GM12878 (cell line): ENCODE measurements at regions of chr1 and their contacts with region 1.

Region 1: GRCh38 chr1:211680752-211681327 is 5.4 kb upstream of the NEK2 start:
- DNase-seq: peak; percentile 80
- ATAC-seq: peak; percentile 84
- H3K4me3 ChIP-seq: no peak overlapping the region
- H3K27ac ChIP-seq: peak overlapping the region; percentile 38
- H3K4me1 ChIP-seq: peaks cover 16% of the 10 kb centered on the region
- H3K27me3 ChIP-seq: no peaks in the 10 kb centered on the region
- CTCF ChIP-seq: peak; percentile 66 to 87 (median 81); a peak in 5 of 6 replicates
- EP300 ChIP-seq: 0 out of 4 replicates have a peak, but pooled peaks of 1 of the 2 experiments have one; percentile 20
- POLR2A ChIP-seq: no peak
- RAD21 ChIP-seq: peak; percentile 88

Region 2: GRCh38 chr1:211611818-211612217 is 69.0 kb before region 1 on chr1:
- CTCF ChIA-PET with region 1: no interaction called
- POLR2A ChIA-PET with region 1: no interaction called
- RAD21 ChIA-PET with region 1: no interaction called
- SMC1A ChIA-PET with region 1: no interaction called
- in situ Hi-C with region 1: no loop called
- intact Hi-C with region 1: no loop called
- DNase-seq: no peak
- ATAC-seq: no peak
- H3K4me3 ChIP-seq: no peak overlapping the region
- H3K27ac ChIP-seq: no peak overlapping the region
- H3K4me1 ChIP-seq: peaks cover 8% of the 10 kb centered on the region
- H3K27me3 ChIP-seq: no peaks in the 10 kb centered on the region
- CTCF ChIP-seq: no peak
- EP300 ChIP-seq: no peak
- POLR2A ChIP-seq: no peak
- RAD21 ChIP-seq: no peak

Region 3: GRCh38 chr1:211830330-211831142 is 149.7 kb after region 1 on chr1 and contains the start of gene LPGAT1:
- CTCF ChIA-PET with region 1: interaction called, 44 read pairs
- POLR2A ChIA-PET with region 1: interaction called, 9 read pairs
- RAD21 ChIA-PET with region 1: interaction called, 6 read pairs
- SMC1A ChIA-PET with region 1: interaction called, 10 read pairs
- in situ Hi-C with region 1: no loop called
- intact Hi-C with region 1: loop called (anchors 1 kb)
- DNase-seq: no peak
- ATAC-seq: peak; percentile 82
- H3K4me3 ChIP-seq: peak within 1 kb of the TSS; percentile 98
- H3K27ac ChIP-seq: peak within 1 kb of the TSS; percentile 85
- H3K4me1 ChIP-seq: peaks cover 28% of the 10 kb centered on the region
- H3K27me3 ChIP-seq: no peaks in the 10 kb centered on the region
- CTCF ChIP-seq: peak; percentile 50 to 63 (median 53); a peak in 5 of 6 replicates
- EP300 ChIP-seq: no peak
- POLR2A ChIP-seq: peak; percentile 75
- RAD21 ChIP-seq: peak; percentile 25; the same call in 1 of the 2 replicates
- polyA plus RNA-seq, gene LPGAT1: 5.8 to 6.4 TPM

Region 4: DNA sequence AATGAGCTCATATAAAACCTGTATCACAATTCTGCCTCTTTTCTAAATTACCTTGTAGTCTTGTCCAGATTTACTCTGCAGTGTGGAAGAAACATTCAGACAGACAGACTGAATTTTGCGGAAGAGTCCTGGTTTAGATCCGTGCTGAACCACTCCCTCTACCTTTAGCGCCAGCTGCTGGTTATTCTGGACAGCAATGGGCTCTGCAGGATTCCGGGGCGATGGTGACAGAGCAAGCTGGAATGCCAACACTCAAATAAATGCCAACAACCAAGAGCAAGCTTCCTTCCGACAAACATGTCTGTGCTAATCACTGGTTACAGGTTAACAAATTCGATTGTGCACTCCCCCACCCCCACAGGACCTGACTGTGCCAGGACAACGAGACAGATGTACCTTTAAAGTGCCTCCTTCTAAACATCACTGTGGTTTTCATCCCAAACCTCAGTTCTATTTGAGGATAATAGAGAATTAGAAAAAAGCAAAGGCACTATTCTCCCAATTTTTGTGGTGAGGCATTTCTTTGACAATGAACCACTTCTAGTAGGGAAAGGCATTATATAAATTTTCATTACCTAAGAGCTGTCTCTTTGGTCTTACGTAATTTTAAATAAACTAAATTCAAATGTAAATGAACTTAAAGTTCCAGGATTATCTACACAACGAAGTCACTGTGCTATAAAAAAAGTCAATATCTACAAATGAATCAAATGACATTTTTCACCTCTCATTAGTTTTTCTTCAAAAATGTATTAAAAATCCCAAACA is 264.1 kb after region 1 on chr1:
- CTCF ChIA-PET with region 1: interaction called, 7 read pairs
- POLR2A ChIA-PET with region 1: interaction called, 4 read pairs
- RAD21 ChIA-PET with region 1: interaction called, 12 read pairs
- SMC1A ChIA-PET with region 1: interaction called, 5 read pairs
- in situ Hi-C with region 1: no loop called
- intact Hi-C with region 1: no loop called
- DNase-seq: no peak
- ATAC-seq: no peak
- H3K4me3 ChIP-seq: no peak overlapping the region
- H3K27ac ChIP-seq: no peak overlapping the region
- H3K4me1 ChIP-seq: peaks cover 8% of the 10 kb centered on the region; the same call in 1 of the 2 replicates
- H3K27me3 ChIP-seq: no peaks in the 10 kb centered on the region
- CTCF ChIP-seq: no peak
- EP300 ChIP-seq: no peak
- POLR2A ChIP-seq: no peak
- RAD21 ChIP-seq: no peak

Region 5: GRCh38 chr1:212012034-212012740 is 331.3 kb after region 1 on chr1:
- CTCF ChIA-PET with region 1: interaction called, 16 read pairs
- POLR2A ChIA-PET with region 1: no interaction called
- RAD21 ChIA-PET with region 1: interaction called, 9 read pairs
- SMC1A ChIA-PET with region 1: interaction called, 9 read pairs
- in situ Hi-C with region 1: no loop called
- intact Hi-C with region 1: loop called (anchors 1 kb)
- DNase-seq: peak; percentile 38
- ATAC-seq: peak; percentile 100
- H3K4me3 ChIP-seq: no peak overlapping the region
- H3K27ac ChIP-seq: no peak overlapping the region
- H3K4me1 ChIP-seq: no peaks in the 10 kb centered on the region
- H3K27me3 ChIP-seq: no peaks in the 10 kb centered on the region
- CTCF ChIP-seq: peak; percentile 95 to 100 (median 98)
- EP300 ChIP-seq: no peak
- POLR2A ChIP-seq: no peak
- RAD21 ChIP-seq: peak; percentile 97

Region 6: GRCh38 chr1:212062832-212063438 is 382.1 kb after region 1 on chr1:
- CTCF ChIA-PET with region 1: interaction called, 47 read pairs
- POLR2A ChIA-PET with region 1: no interaction called
- RAD21 ChIA-PET with region 1: interaction called, 14 read pairs
- SMC1A ChIA-PET with region 1: interaction called, 19 read pairs
- in situ Hi-C with region 1: no loop called
- intact Hi-C with region 1: no loop called
- DNase-seq: no peak
- ATAC-seq: peak; percentile 83
- H3K4me3 ChIP-seq: no peak overlapping the region
- H3K27ac ChIP-seq: no peak overlapping the region
- H3K4me1 ChIP-seq: no peaks in the 10 kb centered on the region
- H3K27me3 ChIP-seq: no peaks in the 10 kb centered on the region
- CTCF ChIP-seq: peak; percentile 54 to 63 (median 56); a peak in 5 of 6 replicates
- EP300 ChIP-seq: no peak
- POLR2A ChIP-seq: no peak
- RAD21 ChIP-seq: peak; percentile 59

Region 7: GRCh38 chr1:212291505-212292134 is 610.8 kb after region 1 on chr1:
- CTCF ChIA-PET with region 1: interaction called, 9 read pairs
- POLR2A ChIA-PET with region 1: no interaction called
- RAD21 ChIA-PET with region 1: interaction called, 15 read pairs
- SMC1A ChIA-PET with region 1: interaction called, 8 read pairs
- in situ Hi-C with region 1: no loop called
- intact Hi-C with region 1: loop called (anchors 2 kb)
- DNase-seq: no peak
- ATAC-seq: peak; percentile 87
- H3K4me3 ChIP-seq: peak overlapping the region; percentile 54; the same call in 1 of the 2 replicates
- H3K27ac ChIP-seq: no peak overlapping the region
- H3K4me1 ChIP-seq: peaks cover 18% of the 10 kb centered on the region
- H3K27me3 ChIP-seq: no peaks in the 10 kb centered on the region
- CTCF ChIP-seq: peak; percentile 63 to 87 (median 76); a peak in 5 of 6 replicates
- EP300 ChIP-seq: no peak
- POLR2A ChIP-seq: no peak
- RAD21 ChIP-seq: peak; percentile 93